Activated B cell treated with CpG ODN at 0.5 μM for 24 hours (primary cell): ENCODE measurements at regions of chr2 and their contacts with region 1.

Region 1: GRCh38 chr2:205130111-205130829 is 552.0 kb upstream of the NRP2 start:
- DNase-seq: no peak
- ATAC-seq: no peak
- H3K4me3 Mint-ChIP-seq: no peak overlapping the region
- H3K27ac Mint-ChIP-seq: no peak overlapping the region
- H3K4me1 Mint-ChIP-seq: no peaks in the 10 kb centered on the region
- H3K27me3 Mint-ChIP-seq: no peaks in the 10 kb centered on the region
- CTCF ChIP-seq: no peak

Region 2: DNA sequence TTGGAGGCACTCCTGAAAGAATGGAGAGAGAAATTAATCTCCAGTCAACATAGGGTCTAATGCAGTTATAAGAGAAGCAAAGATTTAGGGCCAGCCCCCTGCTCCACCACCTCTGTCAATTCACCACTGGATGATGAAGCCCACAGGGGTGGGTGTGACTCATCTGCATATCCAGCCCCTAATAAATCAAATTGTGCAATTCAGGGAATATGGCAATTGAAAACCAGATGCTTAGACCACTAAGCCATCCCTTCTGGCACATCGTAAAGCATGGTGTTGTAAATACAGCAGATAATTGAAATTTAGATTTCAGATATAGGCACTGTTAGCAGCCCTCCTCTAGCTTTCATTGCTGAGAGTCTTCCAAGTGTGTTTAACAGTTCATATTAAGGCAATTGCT is 43.6 kb before region 1 on chr2:
- CTCF ChIA-PET with region 1: no interaction called
- POLR2A ChIA-PET with region 1: no interaction called
- intact Hi-C with region 1: no loop called
- DNase-seq: no peak
- ATAC-seq: no peak
- H3K4me3 Mint-ChIP-seq: no peak overlapping the region
- H3K27ac Mint-ChIP-seq: no peak overlapping the region
- H3K4me1 Mint-ChIP-seq: no peaks in the 10 kb centered on the region
- H3K27me3 Mint-ChIP-seq: no peaks in the 10 kb centered on the region
- CTCF ChIP-seq: no peak

Region 3: GRCh38 chr2:205175831-205176230 is 45.6 kb after region 1 on chr2:
- CTCF ChIA-PET with region 1: no interaction called
- POLR2A ChIA-PET with region 1: interaction called, 10 read pairs
- intact Hi-C with region 1: no loop called
- DNase-seq: no peak
- ATAC-seq: no peak
- H3K4me3 Mint-ChIP-seq: no peak overlapping the region
- H3K27ac Mint-ChIP-seq: no peak overlapping the region
- H3K4me1 Mint-ChIP-seq: no peaks in the 10 kb centered on the region
- H3K27me3 Mint-ChIP-seq: no peaks in the 10 kb centered on the region
- CTCF ChIP-seq: no peak